Psoas muscle (tissue), 8 donors: ENCODE measurements at regions of chr14 and their contacts with region 1.

Region 1: DNA sequence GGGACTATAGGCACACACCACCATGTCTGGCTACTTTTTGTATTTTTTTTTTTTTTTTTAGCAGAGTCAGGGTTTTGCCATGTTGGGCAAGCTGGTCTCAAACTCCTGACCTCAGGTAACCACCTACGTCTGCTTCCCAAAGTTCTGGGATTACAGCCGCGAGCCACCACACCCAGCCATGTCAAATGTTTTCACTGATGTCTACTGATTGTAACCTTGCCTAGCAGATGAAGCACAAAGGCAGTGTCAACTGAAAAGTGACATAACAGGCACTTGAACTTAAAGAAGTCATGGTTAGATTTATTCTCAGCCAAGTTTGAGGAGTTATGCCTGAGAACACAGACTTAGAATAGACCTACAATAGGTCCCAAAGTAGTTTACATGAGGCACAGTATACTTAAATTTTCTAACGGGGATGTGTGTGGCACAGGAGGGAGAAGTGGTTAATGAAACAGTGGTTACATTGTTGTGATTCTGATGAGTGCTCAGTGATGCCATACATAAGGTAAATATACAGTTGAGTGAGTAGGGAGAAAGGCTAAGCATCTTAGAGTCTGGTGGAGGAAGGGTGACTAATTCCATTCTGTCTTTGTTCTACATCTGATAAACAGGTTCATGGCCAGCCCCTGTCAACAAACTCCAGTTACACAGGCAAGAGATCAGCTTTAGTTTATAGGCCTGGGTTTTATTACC is 12.6 kb upstream of the RNASE4 start:
- DNase-seq: no peak
- ATAC-seq: no peak
- H3K4me3 ChIP-seq: no peak overlapping the region
- H3K27ac ChIP-seq: no peak overlapping the region
- H3K4me1 ChIP-seq: no peaks in the 10 kb centered on the region
- H3K27me3 ChIP-seq: peaks cover 4 to 21% (median 8%) of the 10 kb centered on the region in 3 donors
- CTCF ChIP-seq: no peak

Region 2: DNA sequence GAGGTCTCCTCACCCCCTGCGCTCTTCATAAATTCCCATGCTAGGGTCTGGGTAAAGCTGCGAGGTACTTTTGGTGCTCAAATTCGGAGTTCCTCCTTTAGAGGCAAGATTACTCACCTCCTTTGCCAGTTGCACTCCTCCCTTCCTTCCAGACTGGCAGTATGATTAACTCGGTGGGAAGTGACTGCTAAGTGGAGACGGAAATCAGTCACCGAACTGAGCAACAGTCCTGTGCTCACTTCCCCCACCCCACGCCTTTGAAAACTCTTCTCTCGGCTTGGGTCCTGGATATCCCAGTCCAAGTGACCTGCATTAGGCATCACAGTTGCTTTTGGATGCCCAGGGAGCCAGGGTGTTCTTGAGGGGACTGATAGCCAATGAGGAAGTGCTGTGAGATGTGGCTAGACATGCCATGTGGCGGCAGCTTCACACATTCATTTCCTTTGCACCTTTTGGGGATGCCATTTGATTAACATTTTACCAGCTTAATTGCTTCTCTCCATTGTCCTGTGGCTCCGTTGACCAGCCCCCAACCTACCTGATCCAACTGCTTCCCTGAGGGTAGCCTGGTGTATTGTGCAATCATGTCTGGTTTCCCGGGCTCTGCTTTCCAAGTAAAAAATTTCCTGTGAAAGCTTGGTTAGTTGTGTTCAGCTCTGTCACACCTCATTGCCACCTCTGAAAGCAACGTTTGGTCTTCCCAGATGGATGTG is 201.7 kb before region 1 on chr14:
- intact Hi-C with region 1: no loop called
- DNase-seq: peak in 1 of 2 donors; percentile 18
- ATAC-seq: peak; percentile 71 to 84 (median 75)
- H3K4me3 ChIP-seq: peak overlapping the region; percentile 78
- H3K27ac ChIP-seq: peak overlapping the region; percentile 75
- H3K4me1 ChIP-seq: peaks cover 6% of the 10 kb centered on the region
- H3K27me3 ChIP-seq: no peaks in the 10 kb centered on the region
- CTCF ChIP-seq: no peak

Region 3: DNA sequence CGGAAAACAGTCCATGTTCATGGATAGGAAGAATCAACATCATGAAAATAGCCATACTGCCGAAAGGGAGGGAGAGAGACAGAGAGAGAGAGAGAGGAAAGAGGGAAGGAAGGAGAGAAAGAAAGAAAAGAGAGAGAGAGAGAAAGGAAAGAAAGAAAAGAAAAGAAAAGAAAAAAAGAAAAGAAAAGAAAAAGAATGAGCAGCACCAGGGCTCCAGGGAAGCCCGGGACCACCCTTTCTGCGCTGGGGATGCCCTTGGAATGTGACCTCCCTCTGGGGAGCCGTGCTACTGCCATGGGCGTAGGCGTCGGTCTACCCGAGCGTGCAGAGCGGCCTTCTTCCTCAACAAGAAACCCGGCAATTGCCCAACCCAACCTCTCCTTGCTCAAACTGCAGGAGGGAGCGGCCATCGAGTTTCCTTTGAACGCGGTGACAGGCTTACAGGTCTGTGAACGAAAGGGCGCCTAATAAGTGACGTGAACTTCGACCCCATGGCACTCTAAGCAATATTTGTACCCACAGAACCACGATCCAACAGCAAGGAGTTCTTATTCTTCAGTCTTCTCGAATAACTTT is 47.2 kb before region 1 on chr14:
- intact Hi-C with region 1: loop called in 1 of 2 experiments (anchors 5 kb)
- DNase-seq: peak; percentile 54 to 69
- ATAC-seq: peak; percentile 43 to 52 (median 48)
- H3K4me3 ChIP-seq: peak overlapping the region; percentile 58
- H3K27ac ChIP-seq: no peak overlapping the region
- H3K4me1 ChIP-seq: peaks cover 17% of the 10 kb centered on the region
- H3K27me3 ChIP-seq: peaks cover 0 to 58% (median 12%) of the 10 kb centered on the region in 3 donors
- CTCF ChIP-seq: no peak